ENCODE measurements at regions of chr12 and their contacts with region 1.

Region 1: GRCh38 chr12:74890237-74890599 is 319.4 kb downstream of the KCNC2 start:
- DNase-seq: peak; percentile 37 to 86
- H3K4me3 ChIP-seq: no peak overlapping the region
- H3K27ac ChIP-seq: peak overlapping the region; percentile 77
- H3K4me1 ChIP-seq: peaks cover 30% of the 10 kb centered on the region
- H3K27me3 ChIP-seq: no peaks in the 10 kb centered on the region
- CTCF ChIP-seq: no peak

Region 2: GRCh38 chr12:74903522-74903921 is 13.3 kb after region 1 on chr12:
- CTCF ChIA-PET with region 1: no interaction called
- POLR2A ChIA-PET with region 1: interaction called, 10 read pairs
- intact Hi-C with region 1: no loop called
- DNase-seq: no peak
- H3K4me3 ChIP-seq: no peak overlapping the region
- H3K27ac ChIP-seq: no peak overlapping the region
- H3K4me1 ChIP-seq: no peaks in the 10 kb centered on the region
- H3K27me3 ChIP-seq: no peaks in the 10 kb centered on the region
- CTCF ChIP-seq: peak; percentile 39; the same call in 1 of the 2 replicates

Region 3: DNA sequence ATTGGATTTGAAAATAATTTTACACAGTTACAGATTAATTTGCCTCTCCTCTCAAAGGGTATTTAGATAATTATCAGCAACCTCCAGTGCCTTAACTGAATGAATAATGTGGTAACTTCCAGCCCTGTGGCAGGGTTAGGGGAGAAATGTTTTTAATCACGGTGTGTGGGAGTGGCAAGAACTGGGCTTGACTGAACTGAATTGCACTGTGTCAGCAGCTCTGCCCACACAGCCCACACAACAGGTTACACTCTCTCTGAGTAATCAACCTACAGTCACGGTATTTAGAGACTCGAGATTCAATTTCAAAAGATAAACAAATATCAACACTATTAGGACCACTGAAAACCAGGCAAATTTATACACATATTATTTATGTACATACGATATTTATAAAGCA is 120.9 kb after region 1 on chr12:
- CTCF ChIA-PET with region 1: no interaction called
- POLR2A ChIA-PET with region 1: interaction called, 10 read pairs
- intact Hi-C with region 1: no loop called
- DNase-seq: no peak
- H3K4me3 ChIP-seq: no peak overlapping the region
- H3K27ac ChIP-seq: no peak overlapping the region
- H3K4me1 ChIP-seq: no peaks in the 10 kb centered on the region
- H3K27me3 ChIP-seq: no peaks in the 10 kb centered on the region
- CTCF ChIP-seq: no peak

Measured in PC-9 (cell line).